OCI-LY7 (cell line): ENCODE measurements at regions of chrX and their contacts with region 1.

Region 1: DNA sequence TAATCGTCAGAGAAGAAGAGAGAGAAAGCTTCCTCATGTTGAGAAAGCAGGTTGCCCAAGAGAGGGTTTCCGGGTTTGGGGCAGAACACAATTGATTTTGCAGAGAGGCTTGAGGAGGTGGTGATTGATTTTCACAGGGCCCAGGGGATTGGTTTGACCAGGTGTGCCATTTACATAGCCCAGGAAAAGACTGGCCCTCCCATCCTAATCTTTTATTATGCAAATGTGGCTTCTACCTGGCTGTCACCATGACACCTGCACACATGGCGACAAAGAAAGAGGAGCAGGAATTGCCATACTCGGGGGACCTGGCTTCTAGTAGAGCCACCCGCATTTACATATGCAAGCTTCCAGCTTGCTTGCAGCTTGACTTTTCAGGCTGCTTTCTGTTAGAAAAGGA is 405.3 kb downstream of the PPP4R3C start:
- DNase-seq: no peak
- H3K4me3 ChIP-seq: no peak overlapping the region
- H3K27ac ChIP-seq: no peak overlapping the region
- H3K4me1 ChIP-seq: no peaks in the 10 kb centered on the region
- CTCF ChIP-seq: no peak

Region 2: DNA sequence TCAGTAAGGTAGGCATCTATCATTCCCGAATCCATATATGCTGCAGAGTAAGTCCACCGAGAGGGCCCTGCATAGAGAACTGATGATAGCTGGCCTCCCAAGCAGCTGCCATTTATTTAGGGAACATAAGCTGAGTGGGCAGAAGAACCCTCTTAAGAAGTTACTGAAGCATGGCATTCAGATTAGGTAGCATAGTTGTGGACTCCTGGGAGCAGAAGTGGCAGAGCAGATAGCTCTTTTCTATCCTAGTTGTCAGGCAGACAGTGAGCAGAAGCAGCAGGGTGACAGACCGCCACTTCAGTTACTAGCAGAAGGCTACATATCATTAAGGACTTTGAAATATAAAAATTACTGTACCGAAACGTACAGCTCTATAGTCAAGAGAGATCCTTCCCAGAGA is 49.4 kb before region 1 on chrX:
- CTCF ChIA-PET with region 1: no interaction called
- POLR2A ChIA-PET with region 1: no interaction called
- intact Hi-C with region 1: loop called (anchors 10 kb)
- DNase-seq: no peak
- H3K4me3 ChIP-seq: no peak overlapping the region
- H3K27ac ChIP-seq: no peak overlapping the region
- H3K4me1 ChIP-seq: no peaks in the 10 kb centered on the region
- CTCF ChIP-seq: no peak